SK-N-SH (cell line): ENCODE measurements at regions of chr2 and their contacts with region 1.

Region 1: DNA sequence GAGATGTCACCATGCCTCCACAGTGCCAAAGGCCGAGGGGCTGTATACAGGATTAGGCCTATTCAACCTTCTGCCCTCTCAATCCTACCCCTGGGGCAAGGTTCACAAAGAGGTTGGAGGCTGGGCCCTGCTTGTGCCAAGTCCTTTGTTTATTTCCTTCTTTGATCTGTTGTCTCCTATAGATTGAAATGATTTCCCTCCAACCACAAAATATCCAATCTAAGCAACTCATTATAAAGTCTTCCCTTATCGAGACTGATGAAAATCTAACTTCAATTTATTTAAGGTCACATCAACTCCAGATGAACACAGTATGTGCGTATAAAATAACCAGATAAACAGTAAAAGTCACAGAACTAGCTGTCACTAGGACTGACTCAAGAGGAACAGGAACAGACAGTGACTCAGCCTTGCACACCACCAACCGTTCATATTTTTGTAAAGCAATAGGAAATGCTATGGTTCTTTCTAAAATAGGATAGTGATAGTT is 95.7 kb downstream of the SLC25A12 start:
- DNase-seq: no peak
- H3K4me3 ChIP-seq: no peak overlapping the region
- H3K27ac ChIP-seq: peak overlapping the region in 1 of 2 experiments; percentile 52; a peak in 3 of 4 replicates
- H3K4me1 ChIP-seq: peaks cover 0 to 4% of the 10 kb centered on the region in 2 experiments; a peak in 2 of 4 replicates
- H3K27me3 ChIP-seq: no peaks in the 10 kb centered on the region
- CTCF ChIP-seq: no peak
- EP300 ChIP-seq: no peak
- RAD21 ChIP-seq: no peak

Region 2: DNA sequence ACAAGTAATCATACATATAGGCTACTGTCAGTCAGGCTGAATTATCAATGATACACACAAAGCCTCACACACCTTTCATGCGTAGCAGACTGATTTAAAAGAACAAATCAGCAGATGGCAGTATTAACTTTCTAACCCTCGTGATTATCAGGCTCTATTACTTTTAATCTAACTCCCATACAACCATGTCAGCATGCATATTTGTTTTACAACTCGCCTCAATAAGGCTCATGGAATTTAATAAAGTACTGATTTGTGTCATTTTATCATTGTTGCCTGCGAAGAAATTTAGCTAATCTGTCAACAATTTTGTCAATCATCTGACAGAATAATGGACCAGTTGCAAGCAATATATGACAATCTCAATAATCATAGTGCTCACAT is 12.9 kb after region 1 on chr2:
- CTCF ChIA-PET with region 1: interaction called, 14 read pairs
- POLR2A ChIA-PET with region 1: no interaction called
- DNase-seq: peak; percentile 34
- H3K4me3 ChIP-seq: no peak overlapping the region
- H3K27ac ChIP-seq: no peak overlapping the region
- H3K4me1 ChIP-seq: no peaks in the 10 kb centered on the region
- H3K27me3 ChIP-seq: no peaks in the 10 kb centered on the region
- CTCF ChIP-seq: peak; percentile 57
- EP300 ChIP-seq: no peak
- RAD21 ChIP-seq: peak; percentile 80